Activated CD4-positive, alpha-beta T cell treated with anti-CD3 and anti-CD28 coated beads, Interleukin-2, amount 10 ng/mL, durations not matched to agents 24 days and 14 days (primary cell): ENCODE measurements at regions of chrX and their contacts with region 1.

Region 1: GRCh38 chrX:40108959-40109287 is 11.2 kb upstream of the BCOR start:
- DNase-seq: peak; percentile 84
- H3K4me3 Mint-ChIP-seq: peak overlapping the region; percentile 61
- H3K27ac Mint-ChIP-seq: no peak overlapping the region
- H3K4me1 Mint-ChIP-seq: peaks cover 9% of the 10 kb centered on the region
- H3K27me3 Mint-ChIP-seq: peaks cover 4% of the 10 kb centered on the region

Region 2: GRCh38 chrX:40153335-40154249 is 44.7 kb after region 1 on chrX:
- intact Hi-C with region 1: loop called (anchors 2 kb)
- DNase-seq: peak; percentile 87
- H3K4me3 Mint-ChIP-seq: peak overlapping the region; percentile 83
- H3K27ac Mint-ChIP-seq: peak overlapping the region; percentile 80
- H3K4me1 Mint-ChIP-seq: peaks cover 12% of the 10 kb centered on the region
- H3K27me3 Mint-ChIP-seq: peaks cover 2% of the 10 kb centered on the region

Region 3: DNA sequence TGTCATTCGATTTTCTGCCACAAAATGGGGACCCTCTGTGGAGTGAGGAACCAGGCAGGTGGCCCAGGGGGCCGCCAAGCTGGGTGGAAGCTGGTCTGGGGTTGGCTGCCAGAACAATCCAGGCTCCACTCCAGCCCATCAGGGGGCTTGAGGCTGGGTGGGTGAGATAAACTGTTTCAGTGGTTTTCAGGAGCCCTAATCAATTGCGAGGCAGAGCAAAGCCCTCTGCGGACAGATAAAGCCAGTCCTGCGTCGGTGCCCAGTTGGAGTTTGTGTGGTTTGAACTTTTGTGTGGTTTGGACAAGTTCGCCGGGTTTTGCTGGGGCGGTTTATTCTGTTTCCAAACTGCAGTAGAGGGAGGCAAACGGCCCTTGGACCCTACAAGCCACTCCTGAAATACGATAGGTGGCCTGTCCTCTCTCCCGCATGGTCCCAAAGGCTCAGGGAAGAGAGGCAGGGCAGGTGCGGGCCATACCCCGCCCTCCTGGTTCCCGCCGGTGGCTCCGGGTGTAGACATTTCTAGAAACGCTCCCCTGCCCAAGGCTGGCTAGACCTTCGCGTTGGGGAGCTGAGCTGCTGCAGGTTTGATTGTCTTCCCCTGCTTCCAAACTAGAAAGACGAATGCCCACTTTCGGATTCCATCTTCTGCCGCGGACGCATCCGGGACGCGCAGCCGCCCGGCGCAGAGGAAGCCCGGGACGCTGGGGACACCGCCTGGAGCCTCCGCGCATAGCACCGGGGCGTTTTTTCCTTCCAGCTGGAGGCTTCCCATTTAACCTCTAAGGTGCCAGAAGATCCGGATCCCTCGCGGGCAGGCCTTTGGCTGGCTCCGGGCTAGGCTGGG is 157.8 kb after region 1 on chrX:
- intact Hi-C with region 1: loop called (anchors 10 kb)
- DNase-seq: peak; percentile 85
- H3K4me3 Mint-ChIP-seq: peak overlapping the region; percentile 78
- H3K27ac Mint-ChIP-seq: no peak overlapping the region
- H3K4me1 Mint-ChIP-seq: peaks cover 4% of the 10 kb centered on the region
- H3K27me3 Mint-ChIP-seq: no peaks in the 10 kb centered on the region